Mammary epithelial cell (primary cell): ENCODE measurements at regions of chr19 and their contacts with region 1.

Region 1: GRCh38 chr19:6125571-6125989 is 9.9 kb upstream of the ACSBG2 start:
- DNase-seq: peak; percentile 73
- H3K4me3 ChIP-seq: no peak overlapping the region
- H3K27ac ChIP-seq: no peak overlapping the region
- H3K4me1 ChIP-seq: no peaks in the 10 kb centered on the region
- H3K27me3 ChIP-seq: no peaks in the 10 kb centered on the region
- CTCF ChIP-seq: peak; percentile 96 to 97

Region 2: DNA sequence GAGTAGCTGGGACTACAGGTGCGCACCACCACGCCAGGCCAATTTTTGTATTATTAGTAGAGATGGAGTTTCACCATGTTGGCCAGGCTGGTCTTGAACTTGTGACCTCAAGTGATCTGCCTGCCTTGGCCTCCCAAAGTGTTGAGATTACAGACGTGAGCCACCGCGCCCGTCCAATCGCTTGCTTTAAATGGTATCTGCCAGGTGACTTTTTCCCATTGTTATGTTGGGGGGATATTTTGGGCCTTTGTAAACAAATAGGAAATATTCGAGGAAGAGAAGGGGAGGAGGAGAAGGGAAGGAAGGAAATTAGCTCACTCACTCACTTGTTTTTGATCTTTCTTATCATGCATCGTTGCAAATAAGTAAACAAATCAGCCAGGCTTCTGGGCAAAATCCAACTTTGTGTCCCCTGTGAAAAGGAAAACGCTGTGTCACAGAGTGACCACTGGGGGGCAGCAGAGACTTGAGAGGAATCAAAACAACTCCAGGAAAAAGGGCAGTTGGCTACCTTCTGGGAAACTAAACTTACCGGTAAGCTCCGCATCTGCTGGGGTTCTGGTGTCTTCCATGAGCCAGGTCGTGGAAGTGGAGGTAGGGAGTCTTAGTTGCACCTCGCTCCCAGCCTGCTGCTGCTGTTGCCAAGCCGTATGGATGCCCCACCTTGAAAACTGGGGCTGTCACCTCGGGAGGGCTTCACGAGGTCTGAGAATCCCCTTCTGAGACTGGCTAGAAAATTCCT is 138.3 kb before region 1 on chr19:
- CTCF ChIA-PET with region 1: no interaction called
- dilution Hi-C with region 1: no loop called
- in situ Hi-C with region 1: no loop called
- intact Hi-C with region 1: loop called (anchors 1 kb)
- DNase-seq: peak; percentile 61
- H3K4me3 ChIP-seq: no peak overlapping the region
- H3K27ac ChIP-seq: no peak overlapping the region
- H3K4me1 ChIP-seq: peaks cover 15% of the 10 kb centered on the region
- H3K27me3 ChIP-seq: no peaks in the 10 kb centered on the region
- CTCF ChIP-seq: peak; percentile 93 to 94

Region 3: DNA sequence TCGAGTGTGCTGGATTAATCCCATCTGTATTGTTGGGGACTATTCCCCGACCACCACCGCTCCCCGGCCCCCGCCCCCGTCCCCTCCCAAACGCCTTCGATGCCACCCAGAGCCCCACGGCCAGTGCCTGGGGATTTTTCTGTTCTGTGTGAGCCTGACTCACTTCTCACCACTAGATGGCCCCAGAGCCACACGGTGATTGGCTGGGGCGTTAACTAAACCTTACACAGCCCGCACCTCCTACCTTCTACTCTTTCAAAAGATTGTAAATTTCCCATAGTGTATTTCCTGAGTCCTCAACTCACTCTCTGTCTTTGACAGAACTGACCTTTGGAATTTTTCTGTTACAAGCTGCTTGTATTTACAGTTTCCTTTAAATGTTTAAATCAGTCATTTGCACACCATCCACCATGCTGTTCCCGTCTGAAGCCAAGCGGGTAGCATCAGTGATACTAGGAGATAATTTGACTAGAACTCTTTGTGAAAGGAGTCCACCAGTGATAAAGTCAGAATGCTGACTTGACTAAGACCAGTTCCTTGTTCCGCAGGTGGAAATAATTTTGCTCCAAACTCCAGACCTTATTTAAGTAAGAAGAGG is 76.7 kb before region 1 on chr19:
- CTCF ChIA-PET with region 1: interaction called, 13 read pairs
- dilution Hi-C with region 1: no loop called
- in situ Hi-C with region 1: loop called in 1 of 2 experiments (anchors 5 kb)
- intact Hi-C with region 1: loop called (anchors 1 kb)
- DNase-seq: peak; percentile 65
- H3K4me3 ChIP-seq: no peak overlapping the region
- H3K27ac ChIP-seq: no peak overlapping the region
- H3K4me1 ChIP-seq: no peaks in the 10 kb centered on the region
- H3K27me3 ChIP-seq: no peaks in the 10 kb centered on the region
- CTCF ChIP-seq: peak; percentile 87 to 91

Region 4: GRCh38 chr19:6056801-6057650 is 68.6 kb before region 1 on chr19:
- CTCF ChIA-PET with region 1: interaction called, 6 read pairs
- dilution Hi-C with region 1: no loop called
- in situ Hi-C with region 1: no loop called
- intact Hi-C with region 1: loop called (anchors 2 kb)
- DNase-seq: peak; percentile 98
- H3K4me3 ChIP-seq: peak overlapping the region; percentile 6 to 36 (median 23)
- H3K27ac ChIP-seq: peak overlapping the region; percentile 99
- H3K4me1 ChIP-seq: peaks cover 57% of the 10 kb centered on the region
- H3K27me3 ChIP-seq: no peaks in the 10 kb centered on the region
- CTCF ChIP-seq: peak in 1 of 2 donors; percentile 1

Region 5: GRCh38 chr19:6279931-6280591 is 154.5 kb after region 1 on chr19 and contains the start of gene MLLT1:
- CTCF ChIA-PET with region 1: interaction called, 12 read pairs
- dilution Hi-C with region 1: no loop called
- in situ Hi-C with region 1: no loop called
- intact Hi-C with region 1: no loop called
- DNase-seq: peak; percentile 97
- H3K4me3 ChIP-seq: peak within 1 kb of the TSS; percentile 81 to 90 (median 85)
- H3K27ac ChIP-seq: peak within 1 kb of the TSS; percentile 66
- H3K4me1 ChIP-seq: peaks cover 5% of the 10 kb centered on the region
- H3K27me3 ChIP-seq: no peaks in the 10 kb centered on the region
- CTCF ChIP-seq: peak; percentile 29 to 56
- total RNA-seq, gene MLLT1: 5.8 to 45.4 TPM

Region 6: GRCh38 chr19:6354098-6354674 is 228.6 kb after region 1 on chr19:
- CTCF ChIA-PET with region 1: no interaction called
- dilution Hi-C with region 1: no loop called
- in situ Hi-C with region 1: no loop called
- intact Hi-C with region 1: loop called (anchors 1 kb)
- DNase-seq: no peak
- H3K4me3 ChIP-seq: no peak overlapping the region
- H3K27ac ChIP-seq: no peak overlapping the region
- H3K4me1 ChIP-seq: peaks cover 7% of the 10 kb centered on the region
- H3K27me3 ChIP-seq: no peaks in the 10 kb centered on the region
- CTCF ChIP-seq: peak; percentile 28 to 53

Region 7: DNA sequence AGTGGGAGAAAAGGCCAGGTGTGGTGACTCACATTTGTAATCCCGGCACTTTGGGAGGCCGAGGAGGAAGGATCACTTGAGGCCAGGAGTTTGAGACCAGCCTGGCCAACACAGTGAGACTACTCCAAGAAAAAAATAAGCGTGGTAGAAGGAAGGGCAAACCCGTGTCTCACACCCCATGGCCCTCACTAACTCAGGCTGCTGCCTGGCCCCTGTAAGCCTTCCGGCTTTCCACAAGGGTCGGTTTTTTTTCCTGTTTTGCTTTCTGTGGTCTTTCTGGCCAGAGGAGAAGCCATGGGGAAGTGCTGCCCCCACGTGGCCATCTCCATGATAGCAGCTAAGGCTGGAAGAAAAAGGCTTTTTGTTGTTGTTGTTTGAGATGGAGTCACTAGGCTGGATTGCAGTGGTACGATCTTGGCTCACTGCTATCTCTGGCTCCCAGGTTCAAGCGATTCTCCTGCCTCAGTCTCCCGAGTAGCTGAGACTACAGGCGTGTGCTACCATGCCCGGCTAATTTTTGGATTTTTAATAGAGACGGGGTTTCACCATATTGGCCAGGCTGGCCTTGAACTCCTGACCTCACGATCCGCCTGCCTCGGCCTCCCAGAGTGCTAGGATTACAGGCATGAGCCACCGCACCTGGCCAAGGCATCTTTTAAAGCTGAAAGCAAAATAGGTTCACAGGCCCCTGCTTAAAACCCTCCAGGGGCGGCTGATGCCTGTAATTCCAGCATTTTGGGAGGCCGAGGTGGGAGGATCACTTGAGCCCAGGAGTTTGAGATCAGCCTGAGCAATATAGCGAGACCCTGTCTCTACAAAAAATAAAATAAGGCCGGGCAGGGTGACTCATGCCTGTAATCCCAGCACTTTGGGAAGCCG is 1215.6 kb after region 1 on chr19:
- CTCF ChIA-PET with region 1: no interaction called
- dilution Hi-C with region 1: no loop called
- in situ Hi-C with region 1: no loop called
- intact Hi-C with region 1: loop called (anchors 5 kb)
- DNase-seq: peak; percentile 52
- H3K4me3 ChIP-seq: no peak overlapping the region
- H3K27ac ChIP-seq: no peak overlapping the region
- H3K4me1 ChIP-seq: no peaks in the 10 kb centered on the region
- H3K27me3 ChIP-seq: no peaks in the 10 kb centered on the region
- CTCF ChIP-seq: peak; percentile 82 to 86